Ascending aorta (tissue), 2 donors: ENCODE measurements at regions of chr5 and their contacts with region 1.

Region 1: DNA sequence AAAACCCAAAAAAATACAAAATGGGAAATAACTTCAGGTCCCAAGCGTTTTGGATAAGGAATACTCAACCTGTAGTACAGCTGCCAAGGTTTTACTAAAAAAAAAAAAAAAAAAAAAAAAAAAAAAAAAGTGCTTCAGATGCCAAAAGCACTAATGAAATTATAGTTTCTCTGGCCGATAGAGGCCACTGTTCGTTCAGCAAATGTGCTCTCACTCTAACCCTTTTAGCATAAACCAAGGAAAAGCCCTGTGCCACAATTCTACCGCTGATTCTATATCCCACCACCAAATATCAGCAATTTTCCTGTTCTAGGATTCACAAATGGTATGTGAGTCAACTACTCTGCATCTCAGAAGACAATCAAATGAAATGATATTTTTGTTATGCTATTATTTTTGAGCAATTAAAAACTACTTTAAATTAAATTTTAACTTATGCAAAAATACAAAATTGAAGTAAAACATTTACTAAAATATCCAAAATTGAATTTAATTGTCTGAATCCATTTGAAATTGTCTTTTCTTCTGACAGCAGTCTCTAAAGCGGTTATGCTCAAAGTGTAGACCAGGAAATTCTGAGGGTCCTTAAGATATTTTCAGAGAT is 79.8 kb downstream of the RICTOR start:
- DNase-seq: no peak
- H3K4me3 ChIP-seq: no peak overlapping the region
- H3K27ac ChIP-seq: no peak overlapping the region
- H3K4me1 ChIP-seq: no peaks in the 10 kb centered on the region
- H3K27me3 ChIP-seq: no peaks in the 10 kb centered on the region
- CTCF ChIP-seq: peak in 2 of 3 experiments; percentile 35 to 59

Region 2: DNA sequence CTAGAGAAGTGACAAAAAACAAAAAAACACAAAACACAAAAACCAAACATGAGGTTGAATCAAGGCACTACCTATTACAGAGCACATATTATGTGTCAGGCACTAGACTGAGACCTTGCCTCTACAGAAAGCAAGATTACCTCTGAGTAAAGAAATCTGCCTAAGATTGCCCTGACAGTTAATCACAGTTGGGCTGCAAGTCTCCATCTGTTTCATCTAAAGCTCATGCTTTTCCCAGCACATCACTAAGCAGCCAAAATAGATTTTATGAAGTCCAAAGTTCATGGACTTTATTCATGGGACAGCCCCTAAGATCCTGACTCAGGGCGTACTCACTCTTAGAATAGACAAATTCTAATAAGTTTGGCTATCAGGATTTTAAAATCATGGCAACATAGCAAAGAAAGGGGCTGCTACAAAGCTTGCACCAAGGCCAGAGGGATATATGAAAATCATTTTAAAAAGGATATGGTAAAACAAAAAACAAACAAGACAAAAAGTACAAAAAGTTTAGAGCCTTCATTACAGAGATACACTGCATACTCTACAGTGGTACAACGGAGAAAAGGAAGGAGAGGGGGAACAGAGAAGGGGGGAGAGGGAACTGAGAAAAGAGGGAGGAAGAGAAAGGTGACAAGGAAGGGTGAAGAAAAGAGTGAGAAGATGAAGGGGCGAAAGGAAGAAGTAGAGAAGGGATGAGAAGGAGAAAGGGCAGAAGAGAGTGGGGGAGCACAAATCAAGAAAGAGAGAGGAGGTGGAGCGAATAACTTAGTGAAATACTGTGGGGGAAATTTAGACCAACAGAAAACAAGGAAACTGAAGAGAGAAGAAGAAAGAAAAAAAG is 21.5 kb after region 1 on chr5:
- intact Hi-C with region 1: no loop called
- DNase-seq: no peak
- H3K4me3 ChIP-seq: no peak overlapping the region
- H3K27ac ChIP-seq: peak overlapping the region; percentile 87
- H3K4me1 ChIP-seq: peaks cover 0 to 21% of the 10 kb centered on the region in 2 donors
- H3K27me3 ChIP-seq: no peaks in the 10 kb centered on the region
- CTCF ChIP-seq: no peak

Region 3: GRCh38 chr5:39217365-39218281 is 223.2 kb after region 1 on chr5:
- intact Hi-C with region 1: loop called (anchors 10 kb)
- DNase-seq: peak in 1 of 2 donors; percentile 88
- H3K4me3 ChIP-seq: peak overlapping the region in 1 of 2 donors; percentile 5
- H3K27ac ChIP-seq: no peak overlapping the region
- H3K4me1 ChIP-seq: no peaks in the 10 kb centered on the region
- H3K27me3 ChIP-seq: no peaks in the 10 kb centered on the region
- CTCF ChIP-seq: peak; percentile 85 to 96 (median 95)